ENCODE measurements at regions of chr5 and their contacts with region 1.

Region 1: GRCh38 chr5:61525512-61526206 is 193.6 kb downstream of the ZSWIM6 start:
- DNase-seq: peak; percentile 57 to 59
- H3K4me3 ChIP-seq: no peak overlapping the region
- H3K27ac ChIP-seq: no peak overlapping the region
- H3K4me1 ChIP-seq: 0 out of 2 replicates have a peak, but pooled peaks cover 10% of the 10 kb centered on the region
- H3K27me3 ChIP-seq: no peaks in the 10 kb centered on the region
- CTCF ChIP-seq: no peak

Region 2: GRCh38 chr5:61162010-61162831 is 363.4 kb before region 1 on chr5 and contains the start of gene SMIM15:
- CTCF ChIA-PET with region 1: no interaction called
- POLR2A ChIA-PET with region 1: no interaction called
- intact Hi-C with region 1: loop called (anchors 10 kb)
- DNase-seq: peak; percentile 81 to 85
- H3K4me3 ChIP-seq: peak within 1 kb of the TSS; percentile 95
- H3K27ac ChIP-seq: peak within 1 kb of the TSS; percentile 76
- H3K4me1 ChIP-seq: peaks cover 30% of the 10 kb centered on the region
- H3K27me3 ChIP-seq: no peaks in the 10 kb centered on the region
- CTCF ChIP-seq: no peak
- total RNA-seq, gene SMIM15: 50.6 and 58.2 TPM in 2 replicates

Region 3: GRCh38 chr5:61658592-61659008 is 132.9 kb after region 1 on chr5:
- CTCF ChIA-PET with region 1: no interaction called
- POLR2A ChIA-PET with region 1: no interaction called
- intact Hi-C with region 1: loop called (anchors 10 kb)
- DNase-seq: peak in 1 of 2 experiments; percentile 82
- H3K4me3 ChIP-seq: no peak overlapping the region
- H3K27ac ChIP-seq: no peak overlapping the region
- H3K4me1 ChIP-seq: no peaks in the 10 kb centered on the region
- H3K27me3 ChIP-seq: no peaks in the 10 kb centered on the region
- CTCF ChIP-seq: peak; percentile 94

Region 4: DNA sequence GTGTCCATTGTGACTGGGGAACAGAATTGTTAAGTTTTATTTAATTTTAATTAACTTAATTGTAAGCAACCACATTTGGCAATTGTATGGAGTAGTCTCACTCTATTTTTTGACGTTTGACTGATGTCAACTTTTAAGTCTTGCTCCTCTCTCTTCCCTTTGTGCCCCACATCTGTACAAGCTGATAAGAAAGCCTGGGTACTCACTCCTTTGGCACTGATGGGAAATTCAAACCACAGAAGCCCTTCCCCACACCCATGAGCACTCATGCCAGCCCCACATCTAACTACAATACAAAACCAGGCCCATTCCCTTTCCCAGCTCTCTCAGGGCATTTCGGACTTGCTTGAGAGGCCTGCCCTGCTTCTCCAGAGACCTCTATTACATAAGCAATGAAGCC is 328.9 kb after region 1 on chr5:
- CTCF ChIA-PET with region 1: no interaction called
- POLR2A ChIA-PET with region 1: no interaction called
- intact Hi-C with region 1: no loop called
- DNase-seq: no peak
- H3K4me3 ChIP-seq: no peak overlapping the region
- H3K27ac ChIP-seq: no peak overlapping the region
- H3K4me1 ChIP-seq: no peaks in the 10 kb centered on the region
- H3K27me3 ChIP-seq: no peaks in the 10 kb centered on the region
- CTCF ChIP-seq: no peak